H1 (cell line): ENCODE measurements at regions of chr19 and their contacts with region 1.

Region 1: DNA sequence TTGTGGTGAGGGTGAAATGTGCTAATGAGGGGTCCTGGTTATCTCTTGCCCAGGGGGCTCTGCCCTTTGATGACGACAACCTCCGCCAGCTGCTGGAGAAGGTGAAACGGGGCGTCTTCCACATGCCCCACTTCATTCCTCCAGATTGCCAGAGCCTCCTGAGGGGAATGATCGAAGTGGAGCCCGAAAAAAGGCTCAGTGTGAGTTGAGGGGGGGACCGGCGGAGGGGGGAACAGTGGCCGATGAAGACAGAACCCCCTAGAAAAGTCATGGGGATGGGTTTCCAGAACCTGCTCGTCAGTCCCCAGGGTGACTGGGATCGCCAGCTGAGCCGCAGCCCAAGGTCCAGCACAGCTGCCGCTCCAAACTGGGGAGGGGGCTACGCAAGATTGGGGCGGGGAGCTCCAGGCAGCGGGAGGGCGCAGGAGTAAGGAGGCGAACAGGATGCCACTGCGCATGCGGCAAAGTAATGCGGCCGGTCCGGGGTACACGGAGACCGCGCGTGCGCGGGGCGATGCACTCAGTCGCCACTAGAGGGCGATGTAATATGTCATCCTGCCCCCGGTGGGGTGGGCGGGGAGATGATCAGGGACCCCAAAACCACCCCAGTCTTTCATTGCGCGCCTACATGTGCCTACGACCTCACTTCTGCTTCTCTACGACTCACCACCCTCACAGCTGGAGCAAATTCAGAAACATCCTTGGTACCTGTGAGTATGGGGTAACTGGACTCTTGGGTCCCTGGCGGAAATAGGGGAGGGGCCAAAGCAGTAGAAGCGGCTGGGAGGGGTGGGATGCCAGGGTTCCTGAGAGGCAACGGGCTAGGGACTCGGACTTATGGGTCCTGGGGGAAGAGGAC is 17.9 kb downstream of the BRSK1 start:
- DNase-seq: peak; percentile 73 to 100
- H3K4me3 ChIP-seq: peak overlapping the region in 2 of 4 experiments; percentile 23 to 39; a peak in 4 of 8 replicates
- H3K27ac ChIP-seq: no peak overlapping the region
- H3K4me1 ChIP-seq: peaks cover 0 to 8% (median 3%) of the 10 kb centered on the region in 4 experiments; a peak in 3 of 7 replicates
- H3K27me3 ChIP-seq: no peaks in the 10 kb centered on the region
- CTCF ChIP-seq: peak; percentile 89 to 95 (median 94)
- EP300 ChIP-seq: no peak
- POLR2A ChIP-seq: no peak
- RAD21 ChIP-seq: peak; percentile 71 to 74

Region 2: DNA sequence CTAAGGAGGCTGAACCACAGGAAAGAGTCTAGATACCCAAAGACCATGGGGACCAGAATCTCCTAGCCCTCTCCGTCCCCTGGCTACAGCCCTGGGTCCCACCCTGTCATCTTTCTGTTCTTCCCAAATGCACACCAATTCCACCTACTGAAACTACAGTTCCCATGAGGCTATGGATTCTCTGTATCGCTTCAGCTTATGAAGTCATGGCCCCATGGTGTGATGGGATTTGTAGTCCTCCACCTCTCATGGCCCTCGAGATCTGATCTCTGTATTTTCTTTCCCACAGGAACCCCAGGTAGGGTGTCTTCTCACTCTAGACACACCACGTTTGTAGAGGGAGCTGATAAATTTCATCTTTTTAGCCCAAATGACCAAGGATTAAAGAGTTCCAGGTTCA is 104.2 kb before region 1 on chr19:
- CTCF ChIA-PET with region 1: no interaction called
- POLR2A ChIA-PET with region 1: no interaction called
- DNase-seq: no peak
- H3K4me3 ChIP-seq: no peak overlapping the region
- H3K27ac ChIP-seq: no peak overlapping the region
- H3K4me1 ChIP-seq: no peaks in the 10 kb centered on the region
- H3K27me3 ChIP-seq: no peaks in the 10 kb centered on the region
- CTCF ChIP-seq: no peak
- EP300 ChIP-seq: no peak
- POLR2A ChIP-seq: no peak
- RAD21 ChIP-seq: no peak

Region 3: GRCh38 chr19:55279770-55280643 is 21.7 kb before region 1 on chr19 and contains the start of gene HSPBP1:
- CTCF ChIA-PET with region 1: interaction called, 12 read pairs
- POLR2A ChIA-PET with region 1: interaction called, 3 read pairs
- DNase-seq: peak; percentile 99
- H3K4me3 ChIP-seq: peak within 1 kb of the TSS; percentile 71 to 98 (median 90)
- H3K27ac ChIP-seq: peak within 1 kb of the TSS; percentile 85
- H3K4me1 ChIP-seq: peaks cover 3 to 19% (median 7%) of the 10 kb centered on the region in 4 experiments
- H3K27me3 ChIP-seq: no peaks in the 10 kb centered on the region
- CTCF ChIP-seq: no peak
- EP300 ChIP-seq: no peak
- POLR2A ChIP-seq: peak in 1 of 2 experiments; percentile 77; a peak in 2 of 3 replicates
- RAD21 ChIP-seq: no peak
- total RNA-seq, gene HSPBP1: 63.4 and 68.8 TPM in 2 replicates

Region 4: GRCh38 chr19:55312621-55313512 is 11.2 kb after region 1 on chr19:
- CTCF ChIA-PET with region 1: interaction called, 33 read pairs
- POLR2A ChIA-PET with region 1: interaction called, 32 read pairs
- DNase-seq: no peak
- H3K4me3 ChIP-seq: no peak overlapping the region
- H3K27ac ChIP-seq: no peak overlapping the region
- H3K4me1 ChIP-seq: no peaks in the 10 kb centered on the region
- H3K27me3 ChIP-seq: no peaks in the 10 kb centered on the region
- CTCF ChIP-seq: no peak
- EP300 ChIP-seq: no peak
- POLR2A ChIP-seq: no peak; a peak in 1 of 3 replicates
- RAD21 ChIP-seq: no peak

Region 5: DNA sequence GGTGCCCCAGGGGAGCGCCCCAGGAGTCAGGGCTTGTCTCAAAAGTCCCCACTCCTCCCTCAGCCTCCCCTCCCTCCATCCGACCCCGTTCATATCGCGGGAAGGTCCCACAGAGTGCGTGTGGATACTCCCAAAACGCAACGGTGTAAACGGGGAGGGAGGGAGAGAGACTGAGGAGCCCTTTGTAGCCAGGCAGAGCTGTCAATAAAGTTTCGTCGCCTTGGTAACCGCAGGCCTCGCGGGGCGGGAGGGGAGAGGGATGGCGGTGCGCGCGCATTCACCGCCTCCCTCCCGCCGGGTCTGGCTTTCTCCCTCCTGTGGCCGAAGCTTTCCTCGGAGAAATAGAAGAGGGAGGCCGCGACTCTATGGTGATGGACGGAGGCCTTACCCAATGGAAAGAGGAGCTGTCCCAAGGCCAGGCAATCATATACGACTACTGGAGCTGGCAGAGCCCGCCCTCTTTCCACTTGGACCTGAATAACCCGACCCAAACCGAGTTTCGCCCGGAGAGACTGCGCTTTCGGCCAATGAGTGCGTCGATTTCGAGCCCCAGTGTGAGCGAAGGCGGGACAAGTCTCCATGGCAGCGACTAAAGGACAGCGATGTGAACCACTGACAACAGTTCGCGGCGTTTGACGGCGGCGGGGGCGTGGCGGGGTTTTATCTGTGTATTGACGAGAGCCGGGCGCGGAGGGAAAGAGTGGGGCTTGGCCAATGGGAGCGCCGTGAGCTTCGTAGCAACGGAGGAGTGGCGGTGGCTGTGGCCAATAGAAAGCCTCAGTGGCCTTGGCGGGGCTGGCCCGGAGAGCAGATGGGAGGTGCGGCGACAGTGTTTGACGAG is 37.6 kb after region 1 on chr19 and contains the start of gene KMT5C:
- CTCF ChIA-PET with region 1: interaction called, 12 read pairs
- POLR2A ChIA-PET with region 1: interaction called, 19 read pairs
- DNase-seq: peak; percentile 100
- H3K4me3 ChIP-seq: peak within 1 kb of the TSS; percentile 69 to 85 (median 84)
- H3K27ac ChIP-seq: peak within 1 kb of the TSS; percentile 99
- H3K4me1 ChIP-seq: peaks cover 0 to 16% (median 9%) of the 10 kb centered on the region in 4 experiments; a peak in 6 of 7 replicates
- H3K27me3 ChIP-seq: peaks cover 0 to 3% (median 0%) of the 10 kb centered on the region in 4 experiments; a peak in 1 of 7 replicates
- CTCF ChIP-seq: peak in 1 of 3 experiments; percentile 7; a peak in 1 of 4 replicates
- EP300 ChIP-seq: no peak
- POLR2A ChIP-seq: no peak; a peak in 1 of 3 replicates
- RAD21 ChIP-seq: no peak; a peak in 1 of 4 replicates
- total RNA-seq, gene KMT5C: 31.5 and 33.4 TPM in 2 replicates

Region 6: DNA sequence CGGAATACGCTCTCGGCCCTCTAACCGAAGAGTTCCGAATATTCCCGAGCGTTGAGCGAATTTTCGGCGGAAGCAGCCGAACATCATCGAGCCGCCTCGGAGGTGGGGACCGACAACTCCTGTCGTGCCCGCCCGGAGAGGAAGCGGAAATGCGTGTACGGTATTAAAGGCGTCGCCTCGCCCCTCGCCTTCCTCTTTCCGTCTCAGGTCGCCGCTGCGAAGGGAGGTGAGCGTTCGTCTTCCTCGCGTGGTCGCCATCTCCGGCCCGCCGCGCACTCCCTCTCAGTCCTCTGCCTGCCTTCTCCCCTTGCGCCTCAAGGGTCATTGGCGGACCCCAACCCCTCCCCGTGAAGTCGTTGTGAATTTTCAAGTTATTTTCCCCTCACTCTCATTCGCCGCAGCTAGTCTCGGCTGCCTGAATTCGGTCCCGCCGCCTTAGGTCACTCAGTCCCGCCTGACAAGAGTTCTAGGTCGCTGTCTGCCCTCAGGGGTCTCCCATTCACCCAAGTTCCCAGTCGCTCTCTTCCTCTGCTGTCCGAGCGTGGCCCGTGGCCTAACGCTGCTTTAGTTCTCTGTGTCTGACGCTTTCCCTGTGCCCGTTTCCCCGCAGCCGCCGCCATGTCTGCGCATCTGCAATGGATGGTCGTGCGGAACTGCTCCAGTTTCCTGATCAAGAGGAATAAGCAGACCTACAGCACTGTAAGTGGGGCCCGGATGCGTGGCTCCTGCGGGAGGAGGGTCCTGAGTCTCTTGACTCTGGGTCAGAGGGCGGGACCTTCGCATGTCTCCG is 84.2 kb after region 1 on chr19 and contains the start of gene RPL28:
- CTCF ChIA-PET with region 1: interaction called, 37 read pairs
- POLR2A ChIA-PET with region 1: interaction called, 18 read pairs
- DNase-seq: peak; percentile 95 to 99
- H3K4me3 ChIP-seq: peak within 1 kb of the TSS; percentile 89 to 97 (median 94)
- H3K27ac ChIP-seq: peak within 1 kb of the TSS; percentile 86
- H3K4me1 ChIP-seq: peaks cover 0 to 47% (median 38%) of the 10 kb centered on the region in 4 experiments; a peak in 6 of 7 replicates
- H3K27me3 ChIP-seq: peaks cover 0 to 6% (median 3%) of the 10 kb centered on the region in 4 experiments; a peak in 3 of 7 replicates
- CTCF ChIP-seq: no peak
- EP300 ChIP-seq: no peak
- POLR2A ChIP-seq: peak; percentile 100
- RAD21 ChIP-seq: no peak
- total RNA-seq, gene RPL28: 2,123 and 2,232 TPM in 2 replicates